GM12878 (cell line): ENCODE measurements at regions of chr12 and their contacts with region 1.

Region 1: DNA sequence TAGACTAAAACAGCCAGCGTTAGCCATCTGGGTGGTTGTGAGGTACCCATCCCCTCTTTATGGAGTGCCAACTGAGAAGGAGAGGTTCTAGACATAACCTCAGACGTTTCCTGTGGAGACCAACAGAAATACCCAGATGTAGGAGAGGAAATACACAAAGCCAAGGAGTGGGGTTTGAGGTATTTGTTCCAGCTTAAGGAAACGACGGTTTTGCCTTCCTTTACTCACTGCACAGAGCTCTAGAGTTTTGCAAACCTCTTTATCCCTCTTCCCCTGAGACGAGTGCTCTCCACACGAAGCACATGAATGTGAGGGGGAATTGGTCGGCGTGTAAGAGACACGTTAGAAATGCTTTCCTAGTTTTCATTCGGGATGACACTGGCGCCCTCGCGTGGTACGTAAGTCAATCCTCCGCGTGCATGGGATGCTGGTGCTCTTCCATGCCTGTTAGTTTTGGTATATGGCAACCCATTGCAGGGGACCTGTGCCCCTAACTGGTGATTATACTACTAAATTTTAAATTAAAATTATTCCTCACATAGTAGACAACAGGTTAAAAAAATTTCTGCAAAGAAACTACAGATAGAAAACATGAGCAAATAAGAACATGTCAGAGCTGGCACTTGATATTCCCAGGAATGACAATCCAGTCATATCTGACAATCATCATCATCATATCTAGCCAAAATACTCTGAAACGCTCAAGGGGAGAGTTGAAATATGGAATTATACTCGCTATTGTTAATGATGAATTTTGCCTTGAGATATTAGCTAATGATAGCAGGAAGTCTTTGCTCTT is 121.7 kb downstream of the PPM1H start:
- DNase-seq: no peak
- ATAC-seq: peak; percentile 90
- H3K4me3 ChIP-seq: no peak overlapping the region
- H3K27ac ChIP-seq: no peak overlapping the region
- H3K4me1 ChIP-seq: peaks cover 6% of the 10 kb centered on the region; the same call in 1 of the 2 replicates
- H3K27me3 ChIP-seq: peaks cover 0 to 3% of the 10 kb centered on the region in 2 experiments; a peak in 1 of 4 replicates
- CTCF ChIP-seq: peak; percentile 71 to 78 (median 78)
- EP300 ChIP-seq: no peak
- POLR2A ChIP-seq: no peak
- RAD21 ChIP-seq: peak; percentile 81

Region 2: GRCh38 chr12:62522984-62523383 is 290.2 kb before region 1 on chr12:
- CTCF ChIA-PET with region 1: interaction called, 12 read pairs
- POLR2A ChIA-PET with region 1: no interaction called
- RAD21 ChIA-PET with region 1: no interaction called
- SMC1A ChIA-PET with region 1: no interaction called
- in situ Hi-C with region 1: no loop called
- intact Hi-C with region 1: no loop called
- DNase-seq: no peak
- ATAC-seq: peak; percentile 62
- H3K4me3 ChIP-seq: no peak overlapping the region
- H3K27ac ChIP-seq: no peak overlapping the region
- H3K4me1 ChIP-seq: no peaks in the 10 kb centered on the region
- H3K27me3 ChIP-seq: no peaks in the 10 kb centered on the region
- CTCF ChIP-seq: peak in 1 of 3 experiments; percentile 28; a peak in 1 of 6 replicates
- EP300 ChIP-seq: no peak
- POLR2A ChIP-seq: no peak
- RAD21 ChIP-seq: peak; percentile 42

Region 3: GRCh38 chr12:62581288-62582064 is 231.8 kb before region 1 on chr12:
- CTCF ChIA-PET with region 1: interaction called, 20 read pairs
- POLR2A ChIA-PET with region 1: no interaction called
- RAD21 ChIA-PET with region 1: interaction called, 6 read pairs
- SMC1A ChIA-PET with region 1: interaction called, 5 read pairs
- in situ Hi-C with region 1: no loop called
- intact Hi-C with region 1: no loop called
- DNase-seq: no peak
- ATAC-seq: peak; percentile 87
- H3K4me3 ChIP-seq: no peak overlapping the region
- H3K27ac ChIP-seq: no peak overlapping the region
- H3K4me1 ChIP-seq: no peaks in the 10 kb centered on the region
- H3K27me3 ChIP-seq: no peaks in the 10 kb centered on the region
- CTCF ChIP-seq: peak; percentile 49 to 66 (median 65); a peak in 4 of 6 replicates
- EP300 ChIP-seq: no peak
- POLR2A ChIP-seq: no peak
- RAD21 ChIP-seq: peak; percentile 81

Region 4: GRCh38 chr12:62697893-62698292 is 115.3 kb before region 1 on chr12:
- CTCF ChIA-PET with region 1: interaction called, 14 read pairs
- POLR2A ChIA-PET with region 1: no interaction called
- RAD21 ChIA-PET with region 1: no interaction called
- SMC1A ChIA-PET with region 1: no interaction called
- in situ Hi-C with region 1: no loop called
- intact Hi-C with region 1: no loop called
- DNase-seq: no peak
- ATAC-seq: no peak
- H3K4me3 ChIP-seq: no peak overlapping the region
- H3K27ac ChIP-seq: no peak overlapping the region
- H3K4me1 ChIP-seq: no peaks in the 10 kb centered on the region; the same call in 1 of the 2 replicates
- H3K27me3 ChIP-seq: no peaks in the 10 kb centered on the region; a peak in 1 of 4 replicates
- CTCF ChIP-seq: no peak
- EP300 ChIP-seq: no peak
- POLR2A ChIP-seq: no peak
- RAD21 ChIP-seq: no peak

Region 5: DNA sequence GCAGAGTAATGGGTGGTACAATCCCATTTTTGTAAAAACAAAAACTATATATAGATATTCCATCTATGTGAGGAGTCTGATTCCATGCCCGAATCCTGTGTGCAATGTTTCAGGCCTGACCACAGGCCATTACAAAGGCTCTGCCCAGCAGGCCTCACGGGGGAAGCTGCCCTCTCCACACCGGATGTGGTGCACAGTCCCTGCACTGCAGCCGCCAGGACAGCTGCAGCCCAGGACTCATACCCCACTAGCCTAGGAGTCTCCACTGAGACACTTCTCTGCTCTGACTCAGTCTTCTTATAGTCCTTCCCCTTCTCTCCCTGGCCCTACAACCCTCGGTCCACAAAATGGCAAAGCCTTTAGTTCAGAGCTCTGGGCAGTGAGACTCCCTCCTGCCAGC is 68.7 kb before region 1 on chr12:
- CTCF ChIA-PET with region 1: no interaction called
- POLR2A ChIA-PET with region 1: no interaction called
- RAD21 ChIA-PET with region 1: no interaction called
- SMC1A ChIA-PET with region 1: no interaction called
- in situ Hi-C with region 1: no loop called
- intact Hi-C with region 1: no loop called
- DNase-seq: no peak
- ATAC-seq: peak; percentile 85
- H3K4me3 ChIP-seq: no peak overlapping the region
- H3K27ac ChIP-seq: peak overlapping the region; percentile 49
- H3K4me1 ChIP-seq: peaks cover 8% of the 10 kb centered on the region
- H3K27me3 ChIP-seq: no peaks in the 10 kb centered on the region
- CTCF ChIP-seq: no peak
- EP300 ChIP-seq: no peak
- POLR2A ChIP-seq: no peak
- RAD21 ChIP-seq: no peak

Region 6: GRCh38 chr12:62793256-62794217 is 19.7 kb before region 1 on chr12:
- CTCF ChIA-PET with region 1: interaction called, 63 read pairs
- POLR2A ChIA-PET with region 1: no interaction called
- RAD21 ChIA-PET with region 1: interaction called, 6 read pairs
- SMC1A ChIA-PET with region 1: interaction called, 14 read pairs
- in situ Hi-C with region 1: no loop called
- intact Hi-C with region 1: no loop called
- DNase-seq: peak; percentile 27
- ATAC-seq: peak; percentile 84
- H3K4me3 ChIP-seq: no peak overlapping the region
- H3K27ac ChIP-seq: no peak overlapping the region
- H3K4me1 ChIP-seq: no peaks in the 10 kb centered on the region
- H3K27me3 ChIP-seq: no peaks in the 10 kb centered on the region
- CTCF ChIP-seq: peak; percentile 89 to 96 (median 96)
- EP300 ChIP-seq: no peak
- POLR2A ChIP-seq: no peak
- RAD21 ChIP-seq: peak; percentile 98

Region 7: DNA sequence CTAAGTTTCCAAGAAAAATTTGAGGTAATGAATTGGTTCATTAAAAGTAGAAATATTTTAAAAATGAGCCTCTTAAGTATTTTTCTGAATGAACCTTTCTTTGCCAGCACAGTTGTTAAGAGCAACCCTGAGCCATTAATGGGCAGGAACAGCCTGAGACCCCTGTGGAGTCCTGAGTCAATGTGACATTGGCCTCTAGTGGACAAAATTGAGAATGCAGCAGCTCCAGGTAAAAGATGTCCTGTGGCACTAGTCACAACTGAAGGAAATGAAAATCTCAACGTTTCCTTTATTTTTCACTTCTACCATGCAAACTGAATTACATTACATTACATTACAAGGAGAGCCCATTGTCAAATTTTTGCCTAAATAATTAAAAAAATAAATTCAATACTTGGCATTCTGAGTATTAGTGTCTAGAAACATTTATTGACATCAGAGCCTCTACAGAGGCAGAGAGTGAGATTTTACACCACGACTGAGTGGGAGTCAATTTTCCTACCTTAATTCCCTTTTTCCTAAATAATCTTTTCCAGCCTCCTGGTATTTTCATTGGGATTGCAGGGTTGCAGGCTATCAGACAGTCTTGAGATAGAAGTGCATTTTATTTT is 14.0 kb before region 1 on chr12:
- CTCF ChIA-PET with region 1: interaction called, 63 read pairs
- POLR2A ChIA-PET with region 1: no interaction called
- RAD21 ChIA-PET with region 1: interaction called, 7 read pairs
- SMC1A ChIA-PET with region 1: interaction called, 14 read pairs
- in situ Hi-C with region 1: no loop called
- intact Hi-C with region 1: no loop called
- DNase-seq: no peak
- ATAC-seq: peak; percentile 97
- H3K4me3 ChIP-seq: no peak overlapping the region
- H3K27ac ChIP-seq: no peak overlapping the region
- H3K4me1 ChIP-seq: no peaks in the 10 kb centered on the region; the same call in 1 of the 2 replicates
- H3K27me3 ChIP-seq: no peaks in the 10 kb centered on the region
- CTCF ChIP-seq: peak; percentile 94 to 98 (median 96); a peak in 5 of 6 replicates
- EP300 ChIP-seq: no peak
- POLR2A ChIP-seq: no peak
- RAD21 ChIP-seq: peak; percentile 97

Region 8: DNA sequence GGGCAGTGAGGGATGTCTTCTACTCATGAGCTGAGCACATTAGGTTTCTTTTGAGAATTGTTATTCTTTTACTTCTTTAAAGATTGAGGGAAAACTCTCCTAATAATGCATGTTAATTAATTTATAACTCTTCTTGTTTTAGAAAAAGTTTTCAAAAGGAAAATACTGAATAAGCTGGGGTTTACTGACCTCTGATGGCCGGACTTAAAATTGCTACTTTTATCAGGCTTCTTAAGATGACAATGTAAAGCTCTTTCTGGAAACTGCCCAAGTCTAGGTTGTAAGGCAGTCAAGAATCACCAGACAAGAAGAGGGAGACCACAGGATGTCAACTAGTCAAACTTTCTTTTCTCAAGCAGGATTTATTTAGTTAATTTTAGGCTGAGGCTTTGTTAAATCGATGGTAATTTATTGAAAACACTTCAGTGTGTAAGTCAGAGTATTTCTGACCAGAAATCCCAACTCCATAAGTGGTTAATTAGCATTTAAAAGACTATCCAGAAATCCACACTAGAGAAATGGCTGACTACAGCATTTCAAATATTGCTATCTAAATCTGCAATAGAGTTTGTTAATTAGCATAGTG is 255.7 kb after region 1 on chr12:
- CTCF ChIA-PET with region 1: interaction called, 19 read pairs
- POLR2A ChIA-PET with region 1: no interaction called
- RAD21 ChIA-PET with region 1: interaction called, 5 read pairs
- SMC1A ChIA-PET with region 1: interaction called, 11 read pairs
- in situ Hi-C with region 1: no loop called
- intact Hi-C with region 1: loop called (anchors 5 kb)
- DNase-seq: no peak
- ATAC-seq: peak; percentile 55; the same call in 2 of the 3 replicates
- H3K4me3 ChIP-seq: no peak overlapping the region
- H3K27ac ChIP-seq: no peak overlapping the region
- H3K4me1 ChIP-seq: no peaks in the 10 kb centered on the region
- H3K27me3 ChIP-seq: no peaks in the 10 kb centered on the region
- CTCF ChIP-seq: peak; percentile 33 to 48 (median 36); a peak in 3 of 6 replicates
- EP300 ChIP-seq: no peak
- POLR2A ChIP-seq: no peak
- RAD21 ChIP-seq: peak; percentile 59; the same call in 1 of the 2 replicates